ENCODE measurements at regions of chr6 and their contacts with region 1.

Region 1: GRCh38 chr6:110296241-110297025 is 61.7 kb downstream of the METTL24 start:
- DNase-seq: peak in 3 of 9 experiments; percentile 22 to 42 (median 22)
- ATAC-seq: peak; percentile 59
- H3K4me3 ChIP-seq: peak overlapping the region in 1 of 2 experiments; percentile 20
- H3K4me3 Mint-ChIP-seq: peak overlapping the region; percentile 74
- H3K27ac ChIP-seq: peak overlapping the region in 1 of 2 experiments; percentile 26
- H3K27ac Mint-ChIP-seq: peak overlapping the region; percentile 71
- H3K4me1 ChIP-seq: peaks cover 9% of the 10 kb centered on the region
- H3K4me1 Mint-ChIP-seq: peaks cover 28% of the 10 kb centered on the region
- H3K27me3 ChIP-seq: no peaks in the 10 kb centered on the region
- H3K27me3 Mint-ChIP-seq: no peaks in the 10 kb centered on the region
- CTCF ChIP-seq: no peak

Region 2: DNA sequence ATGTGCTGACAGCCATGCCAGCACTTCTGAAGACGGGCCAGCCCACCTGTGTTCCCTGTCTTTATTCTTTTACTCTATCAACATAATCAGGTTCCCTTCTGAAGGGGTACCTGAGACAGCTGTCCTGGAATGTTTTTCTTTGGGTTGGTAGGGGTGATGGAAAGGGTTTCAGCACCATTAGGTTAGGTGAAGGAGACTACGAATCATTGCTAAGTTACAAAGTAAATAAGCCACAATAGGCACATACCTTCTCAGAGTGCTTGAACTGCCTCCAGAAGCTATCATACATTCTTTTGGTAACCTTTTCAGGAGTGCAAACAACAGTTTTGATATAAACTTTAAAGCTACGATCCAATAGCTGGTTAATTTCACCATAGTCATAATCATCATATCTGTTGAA is 1308.1 kb before region 1 on chr6:
- CTCF ChIA-PET with region 1: no interaction called
- POLR2A ChIA-PET with region 1: no interaction called
- intact Hi-C with region 1: no loop called
- DNase-seq: no peak
- ATAC-seq: no peak
- H3K4me3 ChIP-seq: no peak overlapping the region
- H3K4me3 Mint-ChIP-seq: no peak overlapping the region
- H3K27ac ChIP-seq: no peak overlapping the region
- H3K27ac Mint-ChIP-seq: no peak overlapping the region
- H3K4me1 ChIP-seq: no peaks in the 10 kb centered on the region
- H3K4me1 Mint-ChIP-seq: no peaks in the 10 kb centered on the region
- H3K27me3 ChIP-seq: no peaks in the 10 kb centered on the region
- H3K27me3 Mint-ChIP-seq: no peaks in the 10 kb centered on the region
- CTCF ChIP-seq: no peak

Region 3: GRCh38 chr6:110357664-110358552 is 61.5 kb after region 1 on chr6 and contains the start of gene METTL24:
- CTCF ChIA-PET with region 1: no interaction called
- POLR2A ChIA-PET with region 1: no interaction called
- intact Hi-C with region 1: loop called in 1 of 2 experiments (anchors 10 kb)
- DNase-seq: peak in 7 of 9 experiments; percentile 13 to 62 (median 29)
- ATAC-seq: peak; percentile 63
- H3K4me3 ChIP-seq: peak within 1 kb of the TSS; percentile 49 to 57
- H3K4me3 Mint-ChIP-seq: peak within 1 kb of the TSS; percentile 89
- H3K27ac ChIP-seq: peak within 1 kb of the TSS in 1 of 2 experiments; percentile 7
- H3K27ac Mint-ChIP-seq: peak within 1 kb of the TSS; percentile 85
- H3K4me1 ChIP-seq: peaks cover 17% of the 10 kb centered on the region
- H3K4me1 Mint-ChIP-seq: peaks cover 19% of the 10 kb centered on the region
- H3K27me3 ChIP-seq: no peaks in the 10 kb centered on the region
- H3K27me3 Mint-ChIP-seq: peaks cover 28% of the 10 kb centered on the region
- CTCF ChIP-seq: no peak
- total RNA-seq, gene METTL24: 0.33 TPM in 1 of 2 experiments, not detected in the other

Region 4: GRCh38 chr6:110418594-110418993 is 122.2 kb after region 1 on chr6:
- CTCF ChIA-PET with region 1: no interaction called
- POLR2A ChIA-PET with region 1: interaction called, 11 read pairs
- intact Hi-C with region 1: no loop called
- DNase-seq: no peak
- ATAC-seq: no peak
- H3K4me3 ChIP-seq: no peak overlapping the region
- H3K4me3 Mint-ChIP-seq: no peak overlapping the region
- H3K27ac ChIP-seq: no peak overlapping the region
- H3K27ac Mint-ChIP-seq: no peak overlapping the region
- H3K4me1 ChIP-seq: no peaks in the 10 kb centered on the region
- H3K4me1 Mint-ChIP-seq: peaks cover 3% of the 10 kb centered on the region
- H3K27me3 ChIP-seq: no peaks in the 10 kb centered on the region
- H3K27me3 Mint-ChIP-seq: peaks cover 18% of the 10 kb centered on the region
- CTCF ChIP-seq: no peak

Measured in CD8-positive, alpha-beta T cell (primary cell).